ENCODE measurements at regions of chr19 and their contacts with region 1.

Region 1: DNA sequence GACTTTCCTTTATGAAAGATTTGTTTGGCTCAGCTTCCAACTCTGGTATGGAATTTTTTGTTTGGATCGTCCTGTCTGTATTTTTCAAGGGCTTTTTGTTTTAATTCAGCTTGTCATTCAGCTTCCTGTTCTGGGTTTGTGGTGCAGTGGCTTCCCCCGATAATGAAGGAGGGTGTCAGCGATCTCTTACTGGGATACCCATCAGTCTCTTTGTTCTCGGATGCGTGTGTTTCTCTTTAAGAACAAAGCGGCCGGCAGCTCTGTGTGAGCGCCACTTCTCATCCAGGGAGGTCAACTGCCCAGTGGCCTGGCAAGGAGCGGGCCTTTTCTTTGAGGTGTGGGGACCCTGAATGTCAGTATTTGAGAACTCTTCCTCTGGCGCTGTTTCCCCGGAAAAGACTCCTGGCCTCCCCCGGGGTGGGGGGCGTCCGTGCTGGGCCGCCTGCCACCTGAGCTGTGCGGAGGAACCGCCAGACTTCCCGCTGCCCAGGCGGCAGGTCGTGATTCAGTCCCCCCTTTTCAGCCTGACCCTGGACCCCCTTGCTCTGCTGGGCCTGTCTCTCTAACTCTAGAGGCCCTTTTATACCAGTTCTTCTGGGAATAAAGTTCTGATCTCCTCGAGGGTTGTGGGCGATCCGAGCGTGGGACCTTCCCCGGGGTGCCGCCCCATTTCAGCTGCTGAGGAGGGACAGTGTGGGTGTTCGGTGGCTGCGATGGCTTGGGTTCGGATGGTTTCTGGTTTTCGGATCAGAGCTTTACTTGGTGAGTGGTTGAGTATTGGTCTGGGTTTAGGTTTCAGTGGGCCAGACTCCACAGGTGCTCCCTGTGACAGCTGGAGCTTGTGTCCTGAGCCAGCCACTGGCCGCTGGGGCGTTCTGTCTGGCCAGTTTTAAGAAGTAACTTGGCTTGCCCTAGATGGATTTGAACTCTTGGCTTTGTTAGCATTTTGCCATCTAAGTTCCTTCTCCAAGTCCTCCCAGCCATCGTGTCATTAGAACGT is 3.4 kb downstream of the SF3A2 start:
- DNase-seq: peak in 22 of 35 experiments; percentile 17 to 72 (median 40)
- ATAC-seq: peak in 1 of 4 experiments; percentile 15
- H3K4me3 ChIP-seq: peak overlapping the region; percentile 46 to 70
- H3K4me3 Mint-ChIP-seq: peak overlapping the region; percentile 94 to 96 (median 95)
- H3K27ac ChIP-seq: peak overlapping the region; percentile 60
- H3K27ac Mint-ChIP-seq: peak overlapping the region; percentile 88 to 97
- H3K4me1 ChIP-seq: peaks cover 30 to 81% of the 10 kb centered on the region in 2 experiments
- H3K4me1 Mint-ChIP-seq: peaks cover 59 to 69% (median 68%) of the 10 kb centered on the region in 3 donors
- H3K27me3 ChIP-seq: no peaks in the 10 kb centered on the region
- H3K27me3 Mint-ChIP-seq: no peaks in the 10 kb centered on the region

Region 2: DNA sequence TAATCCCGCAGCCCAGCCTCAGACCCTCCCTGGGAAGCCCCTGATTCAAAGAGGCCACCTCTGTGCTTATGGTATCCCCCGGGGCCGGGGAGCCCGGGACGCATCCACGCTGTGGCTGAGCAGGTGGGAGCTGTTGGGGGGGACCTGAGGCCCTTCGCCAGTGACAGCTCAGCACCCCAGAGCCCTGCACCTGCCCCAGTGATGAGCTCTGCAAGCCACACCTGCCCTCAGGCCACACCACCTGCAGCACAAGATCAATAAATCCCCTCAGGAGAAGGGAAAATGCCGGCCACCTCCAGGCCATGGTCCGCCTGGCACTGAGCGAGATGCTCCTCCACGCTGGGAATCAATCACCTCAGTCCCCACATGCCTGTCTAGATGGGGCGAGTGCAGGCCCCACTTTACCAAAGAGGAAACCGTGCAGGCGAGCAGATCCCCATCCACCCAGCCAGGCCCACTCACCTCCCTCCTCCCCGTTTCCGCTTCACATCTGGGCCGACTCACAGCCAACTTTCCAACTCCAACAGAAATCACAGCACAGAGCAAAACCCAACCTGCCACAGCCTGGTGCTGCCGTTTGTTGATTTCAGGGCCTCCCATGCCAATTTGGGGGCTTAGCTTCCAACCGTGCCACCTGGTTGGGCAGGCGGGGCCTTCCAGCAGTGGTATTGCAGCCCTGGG is 156.8 kb before region 1 on chr19:
- CTCF ChIA-PET with region 1: no interaction called
- POLR2A ChIA-PET with region 1: no interaction called
- DNase-seq: peak; percentile 51 to 82 (median 68)
- ATAC-seq: peak; percentile 36 to 62 (median 52)
- H3K4me3 ChIP-seq: peak overlapping the region; percentile 92 to 99
- H3K4me3 Mint-ChIP-seq: peak overlapping the region; percentile 98 to 99 (median 99)
- H3K27ac ChIP-seq: peak overlapping the region; percentile 97
- H3K27ac Mint-ChIP-seq: peak overlapping the region; percentile 99
- H3K4me1 ChIP-seq: peaks cover 31 to 89% of the 10 kb centered on the region in 2 experiments
- H3K4me1 Mint-ChIP-seq: peaks cover 70 to 82% (median 78%) of the 10 kb centered on the region in 3 donors
- H3K27me3 ChIP-seq: no peaks in the 10 kb centered on the region
- H3K27me3 Mint-ChIP-seq: no peaks in the 10 kb centered on the region

Region 3: DNA sequence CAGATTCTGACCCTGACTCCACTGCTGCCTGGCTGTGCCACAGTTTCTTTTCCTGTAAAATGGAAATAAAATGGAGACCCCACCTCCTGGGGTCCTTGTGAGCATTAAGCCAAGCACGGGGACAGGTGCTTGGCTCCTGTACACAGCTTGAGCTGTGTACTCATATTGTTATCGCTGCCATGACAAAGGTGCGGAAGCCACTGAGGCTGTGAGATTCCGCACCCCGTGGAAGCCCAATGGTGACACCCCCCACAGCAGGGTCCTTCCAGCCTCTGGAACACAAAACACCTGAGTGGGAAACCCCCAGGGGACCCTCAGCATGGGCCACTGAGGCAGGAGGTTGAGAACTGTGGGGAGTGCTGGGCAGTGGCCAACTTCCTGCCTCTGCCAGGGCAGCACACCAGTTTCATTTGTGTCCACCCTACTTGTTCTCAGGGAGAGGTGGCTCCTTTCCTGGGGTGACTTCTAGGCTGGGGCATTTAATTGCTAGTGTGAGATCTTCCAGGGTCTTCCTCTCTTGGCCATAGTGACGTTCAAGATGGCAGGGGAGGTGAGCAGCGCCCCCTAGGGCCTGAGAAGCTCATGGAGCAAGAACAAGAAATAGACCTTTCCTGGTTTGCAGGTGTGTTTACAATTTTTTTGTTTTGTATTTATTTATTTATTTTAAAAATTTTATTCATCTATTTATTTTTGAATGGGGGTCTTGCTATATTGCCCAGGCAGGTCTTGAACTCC is 21.5 kb after region 1 on chr19:
- CTCF ChIA-PET with region 1: interaction called, 9 to 11 read pairs
- POLR2A ChIA-PET with region 1: interaction called in 1 of 2 experiments, 9 read pairs
- DNase-seq: peak in 18 of 35 experiments; percentile 39 to 75 (median 48)
- ATAC-seq: no peak
- H3K4me3 ChIP-seq: no peak overlapping the region
- H3K4me3 Mint-ChIP-seq: no peak overlapping the region
- H3K27ac ChIP-seq: peak overlapping the region; percentile 1
- H3K27ac Mint-ChIP-seq: peak overlapping the region; percentile 75 to 82
- H3K4me1 ChIP-seq: peaks cover 4 to 52% of the 10 kb centered on the region in 2 experiments
- H3K4me1 Mint-ChIP-seq: peaks cover 36 to 40% (median 36%) of the 10 kb centered on the region in 3 donors
- H3K27me3 ChIP-seq: no peaks in the 10 kb centered on the region
- H3K27me3 Mint-ChIP-seq: no peaks in the 10 kb centered on the region

Region 4: DNA sequence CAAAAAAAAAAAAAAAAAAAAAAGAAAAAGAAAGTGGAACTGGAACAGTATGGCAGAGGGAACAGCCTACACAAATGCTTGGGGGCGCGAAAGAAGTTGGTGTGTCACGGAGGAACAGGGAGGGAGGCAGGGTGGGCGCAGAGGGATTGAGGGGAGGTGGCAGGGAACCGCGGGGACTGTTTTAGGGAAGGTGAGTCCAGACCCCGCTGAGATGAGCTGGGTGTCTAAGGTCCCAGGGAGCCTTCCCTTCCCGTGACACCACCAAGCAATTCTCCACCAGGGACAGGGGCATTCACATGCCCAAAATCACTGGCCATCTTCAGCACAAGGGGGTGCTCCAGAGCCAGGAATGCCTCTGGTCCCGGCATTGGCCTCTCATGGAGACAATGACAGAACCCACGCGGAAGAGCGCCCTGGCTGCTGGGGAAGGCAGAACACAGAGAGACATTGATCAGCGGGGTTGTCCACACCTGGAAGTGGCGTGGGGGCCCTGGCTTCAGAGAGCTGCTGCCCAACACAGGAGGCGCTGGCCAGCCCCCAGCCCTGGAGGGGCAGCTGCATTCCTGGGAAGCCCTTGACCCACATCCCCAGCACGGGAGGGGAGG is 35.0 kb after region 1 on chr19:
- CTCF ChIA-PET with region 1: interaction called, 3 to 4 read pairs
- POLR2A ChIA-PET with region 1: interaction called in 1 of 2 experiments, 14 read pairs
- DNase-seq: peak in 16 of 35 experiments; percentile 32 to 68 (median 48)
- ATAC-seq: peak in 3 of 4 experiments; percentile 7 to 23 (median 18)
- H3K4me3 ChIP-seq: no peak overlapping the region
- H3K4me3 Mint-ChIP-seq: peak overlapping the region in 2 of 3 donors; percentile 27 to 39
- H3K27ac ChIP-seq: no peak overlapping the region
- H3K27ac Mint-ChIP-seq: peak overlapping the region; percentile 48 to 73
- H3K4me1 ChIP-seq: peaks cover 2 to 46% of the 10 kb centered on the region in 2 experiments
- H3K4me1 Mint-ChIP-seq: peaks cover 36 to 38% (median 36%) of the 10 kb centered on the region in 3 donors
- H3K27me3 ChIP-seq: no peaks in the 10 kb centered on the region
- H3K27me3 Mint-ChIP-seq: no peaks in the 10 kb centered on the region

Measured in T-cell (primary cell).